Thyroid gland (tissue), 4 donors: ENCODE measurements at regions of chr19 and their contacts with region 1.

Region 1: DNA sequence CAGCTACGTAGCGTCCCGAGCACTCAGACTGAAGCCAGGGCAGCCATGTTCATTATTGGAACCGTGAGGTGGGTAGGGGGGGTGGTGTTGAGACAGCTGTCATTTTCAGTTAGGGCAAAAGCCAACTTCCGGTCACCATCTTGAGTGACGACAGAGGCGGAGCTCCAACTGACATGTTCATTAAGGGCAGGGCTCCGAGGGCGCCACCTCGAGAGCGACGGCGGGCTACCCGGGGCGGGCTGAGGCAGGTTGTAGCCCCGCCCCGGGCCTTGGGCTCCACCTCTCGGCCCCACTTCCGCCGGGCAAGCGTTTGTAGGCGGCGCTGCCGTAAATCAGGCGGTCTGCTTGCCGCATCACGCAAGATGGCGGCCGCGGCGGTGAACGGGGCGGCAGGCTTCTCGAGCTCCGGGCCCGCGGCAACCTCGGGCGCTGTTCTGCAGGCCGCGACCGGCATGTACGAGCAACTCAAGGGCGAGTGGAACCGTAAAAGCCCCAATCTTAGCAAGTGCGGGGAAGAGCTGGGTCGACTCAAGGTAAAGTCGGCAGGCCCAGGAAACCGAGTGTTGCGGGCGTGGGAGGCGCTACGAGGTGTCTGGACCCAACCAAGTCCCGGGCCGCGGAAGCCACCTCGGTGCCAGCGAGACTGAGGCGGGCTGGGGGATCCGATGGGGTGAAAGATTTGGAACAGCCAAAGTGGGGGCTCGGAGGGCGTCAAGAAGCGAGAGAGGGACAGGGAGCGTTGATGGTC is at the start of gene PSMD8:
- DNase-seq: peak; percentile 100
- H3K4me3 ChIP-seq: peak within 1 kb of the TSS; percentile 69 to 99 (median 85)
- H3K27ac ChIP-seq: peak within 1 kb of the TSS; percentile 86 to 90 (median 86)
- H3K4me1 ChIP-seq: peaks cover 14 to 15% of the 10 kb centered on the region in 2 donors
- H3K27me3 ChIP-seq: no peaks in the 10 kb centered on the region
- CTCF ChIP-seq: peak in 2 of 6 experiments; percentile 9 to 16
- POLR2A ChIP-seq: peak; percentile 41 to 98
- total RNA-seq, gene PSMD8: 150 to 270 (median 243) TPM

Region 2: DNA sequence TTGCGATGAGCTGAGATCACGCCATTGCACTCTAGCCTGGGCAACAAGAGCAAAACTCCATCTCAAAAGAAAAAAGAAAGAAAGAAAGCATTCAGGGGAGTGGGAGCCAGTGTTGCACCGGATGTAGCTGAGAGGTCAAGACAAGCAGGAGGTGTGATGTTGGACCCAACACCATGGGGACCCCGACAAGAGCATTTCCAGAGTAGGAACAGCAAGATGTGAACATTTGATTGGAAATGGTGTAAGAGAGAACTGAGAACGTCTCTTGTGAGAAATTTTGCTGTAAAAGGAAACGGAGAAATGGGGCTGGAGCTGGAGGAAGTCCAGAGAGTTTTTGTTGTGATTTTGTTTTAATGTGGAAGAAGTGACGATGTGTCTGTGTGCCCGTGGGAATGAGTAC is 134.8 kb before region 1 on chr19:
- intact Hi-C with region 1: loop called (anchors 5 kb)
- DNase-seq: no peak
- H3K4me3 ChIP-seq: no peak overlapping the region
- H3K27ac ChIP-seq: no peak overlapping the region
- H3K4me1 ChIP-seq: peaks cover 0 to 1% of the 10 kb centered on the region in 2 donors
- H3K27me3 ChIP-seq: no peaks in the 10 kb centered on the region
- CTCF ChIP-seq: no peak
- POLR2A ChIP-seq: no peak

Region 3: GRCh38 chr19:38335949-38336637 is 38.5 kb before region 1 on chr19:
- intact Hi-C with region 1: loop called (anchors 5 kb)
- DNase-seq: peak; percentile 96
- H3K4me3 ChIP-seq: peak overlapping the region; percentile 6 to 90 (median 78)
- H3K27ac ChIP-seq: peak overlapping the region; percentile 91 to 94 (median 94)
- H3K4me1 ChIP-seq: peaks cover 9 to 15% of the 10 kb centered on the region in 2 donors
- H3K27me3 ChIP-seq: no peaks in the 10 kb centered on the region
- CTCF ChIP-seq: no peak
- POLR2A ChIP-seq: peak in 1 of 2 donors; percentile 70